ENCODE measurements at regions of chr1 and their contacts with region 1.

Region 1: GRCh38 chr1:182781841-182782586 is 7.6 kb upstream of the NPL start:
- DNase-seq: peak; percentile 33 to 72 (median 54)
- ATAC-seq: peak; percentile 84
- H3K4me3 ChIP-seq: no peak overlapping the region
- H3K4me3 Mint-ChIP-seq: no peak overlapping the region
- H3K27ac ChIP-seq: no peak overlapping the region
- H3K27ac Mint-ChIP-seq: peak overlapping the region in 3 of 9 donors; percentile 33 to 55 (median 39)
- H3K4me1 ChIP-seq: no peaks in the 10 kb centered on the region
- H3K4me1 Mint-ChIP-seq: peaks cover 4 to 20% (median 5%) of the 10 kb centered on the region in 7 donors
- H3K27me3 ChIP-seq: no peaks in the 10 kb centered on the region
- H3K27me3 Mint-ChIP-seq: peaks cover 0 to 12% (median 0%) of the 10 kb centered on the region in 5 donors

Region 2: DNA sequence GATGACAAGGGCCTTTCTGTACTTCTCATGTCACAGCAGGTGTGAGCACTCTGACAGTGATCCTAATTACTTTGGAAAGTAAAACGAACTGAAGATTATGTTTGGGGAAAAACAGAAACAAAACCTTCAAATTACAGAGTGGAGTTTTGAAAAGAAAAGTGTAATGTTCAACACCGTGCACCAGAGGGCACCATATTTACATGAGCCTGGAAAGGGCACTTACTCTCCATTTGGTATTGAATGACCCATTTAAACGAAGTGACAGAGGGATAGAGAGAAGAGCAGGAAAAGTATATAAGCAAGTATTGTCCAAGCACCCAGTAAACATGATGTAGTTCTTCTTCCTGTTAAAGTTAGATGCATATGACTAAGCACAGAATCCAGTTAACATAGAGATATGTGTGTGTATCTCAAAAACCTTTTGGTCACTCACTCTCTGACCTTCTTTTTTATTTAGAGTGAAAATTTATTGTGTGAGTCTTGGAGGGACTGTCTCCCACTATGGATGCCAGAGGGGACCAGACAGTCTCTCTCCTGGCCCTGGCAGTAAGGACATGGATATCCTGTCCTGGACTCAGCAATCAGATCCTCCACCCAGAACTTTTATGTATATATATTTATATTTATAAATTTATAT is 335.9 kb before region 1 on chr1:
- CTCF ChIA-PET with region 1: interaction called, 4 read pairs
- POLR2A ChIA-PET with region 1: no interaction called
- intact Hi-C with region 1: loop called in 1 of 2 experiments (anchors 1 kb)
- DNase-seq: peak in 3 of 9 donors; percentile 12 to 21 (median 13)
- ATAC-seq: peak; percentile 77
- H3K4me3 ChIP-seq: no peak overlapping the region
- H3K4me3 Mint-ChIP-seq: no peak overlapping the region
- H3K27ac ChIP-seq: no peak overlapping the region
- H3K27ac Mint-ChIP-seq: no peak overlapping the region
- H3K4me1 ChIP-seq: no peaks in the 10 kb centered on the region
- H3K4me1 Mint-ChIP-seq: peaks cover 0 to 6% (median 5%) of the 10 kb centered on the region in 7 donors
- H3K27me3 ChIP-seq: no peaks in the 10 kb centered on the region
- H3K27me3 Mint-ChIP-seq: peaks cover 0 to 6% (median 0%) of the 10 kb centered on the region in 5 donors

Region 3: GRCh38 chr1:182595641-182596240 is 186.3 kb before region 1 on chr1:
- CTCF ChIA-PET with region 1: interaction called, 403 read pairs
- POLR2A ChIA-PET with region 1: interaction called, 11 read pairs
- intact Hi-C with region 1: loop called (anchors 1 kb)
- DNase-seq: peak in 8 of 9 donors; percentile 27 to 65 (median 45)
- ATAC-seq: peak; percentile 88
- H3K4me3 ChIP-seq: no peak overlapping the region
- H3K4me3 Mint-ChIP-seq: no peak overlapping the region
- H3K27ac ChIP-seq: no peak overlapping the region
- H3K27ac Mint-ChIP-seq: no peak overlapping the region
- H3K4me1 ChIP-seq: no peaks in the 10 kb centered on the region
- H3K4me1 Mint-ChIP-seq: peaks cover 0 to 11% (median 0%) of the 10 kb centered on the region in 7 donors
- H3K27me3 ChIP-seq: no peaks in the 10 kb centered on the region
- H3K27me3 Mint-ChIP-seq: peaks cover 0 to 18% (median 0%) of the 10 kb centered on the region in 5 donors

Region 4: DNA sequence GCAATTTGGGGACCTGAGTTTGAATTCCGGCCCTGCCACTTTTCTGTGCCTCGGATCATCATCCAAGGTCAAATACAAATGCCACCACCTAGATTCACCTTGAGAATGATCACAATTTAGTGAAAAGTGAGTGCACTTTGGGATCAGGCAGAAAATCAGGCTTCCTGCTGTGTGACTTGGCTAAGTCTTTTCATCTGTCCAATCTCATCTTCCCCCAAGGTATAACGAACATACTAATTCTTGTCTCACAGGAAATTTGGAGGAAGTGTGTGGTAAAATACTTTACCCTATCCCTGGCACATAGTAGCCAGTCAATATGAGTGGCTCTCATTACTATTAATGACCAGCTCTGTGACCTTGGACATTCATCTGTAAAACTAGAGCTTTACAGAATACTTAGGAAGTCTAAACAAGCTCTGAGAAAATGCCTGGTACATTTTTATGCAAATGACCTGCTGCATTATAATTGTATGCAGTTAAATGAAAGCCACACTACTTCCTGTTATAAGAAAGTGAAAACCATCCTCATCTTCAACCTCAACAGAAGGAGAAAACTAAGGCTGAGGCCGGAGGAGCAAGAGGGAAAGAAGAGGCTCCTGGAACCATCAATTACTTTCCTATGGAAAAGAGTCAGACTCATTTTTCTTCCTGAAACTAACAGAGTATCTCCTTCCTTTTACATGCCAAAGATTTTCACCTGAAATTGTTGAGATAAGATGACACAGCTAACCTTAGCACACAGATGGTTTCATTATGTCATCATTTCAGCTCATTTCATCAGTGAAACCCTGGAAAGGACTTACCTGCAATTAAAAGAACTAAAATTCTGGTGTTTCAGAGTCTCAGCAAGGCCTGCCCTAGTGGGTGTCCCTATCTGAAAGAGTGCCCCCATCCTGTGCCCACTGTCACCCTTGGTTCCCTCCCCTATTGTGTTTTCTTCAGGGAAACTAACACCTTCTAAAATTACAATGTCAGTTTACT is 65.0 kb before region 1 on chr1:
- CTCF ChIA-PET with region 1: interaction called, 3 read pairs
- POLR2A ChIA-PET with region 1: no interaction called
- intact Hi-C with region 1: loop called in 1 of 2 experiments (anchors 5 kb)
- DNase-seq: no peak
- ATAC-seq: no peak
- H3K4me3 ChIP-seq: no peak overlapping the region
- H3K4me3 Mint-ChIP-seq: peak overlapping the region in 1 of 10 donors; percentile 18
- H3K27ac ChIP-seq: no peak overlapping the region
- H3K27ac Mint-ChIP-seq: no peak overlapping the region
- H3K4me1 ChIP-seq: peaks cover 4 to 6% of the 10 kb centered on the region in 2 donors
- H3K4me1 Mint-ChIP-seq: peaks cover 9 to 34% (median 27%) of the 10 kb centered on the region in 7 donors
- H3K27me3 ChIP-seq: no peaks in the 10 kb centered on the region
- H3K27me3 Mint-ChIP-seq: no peaks in the 10 kb centered on the region

Region 5: DNA sequence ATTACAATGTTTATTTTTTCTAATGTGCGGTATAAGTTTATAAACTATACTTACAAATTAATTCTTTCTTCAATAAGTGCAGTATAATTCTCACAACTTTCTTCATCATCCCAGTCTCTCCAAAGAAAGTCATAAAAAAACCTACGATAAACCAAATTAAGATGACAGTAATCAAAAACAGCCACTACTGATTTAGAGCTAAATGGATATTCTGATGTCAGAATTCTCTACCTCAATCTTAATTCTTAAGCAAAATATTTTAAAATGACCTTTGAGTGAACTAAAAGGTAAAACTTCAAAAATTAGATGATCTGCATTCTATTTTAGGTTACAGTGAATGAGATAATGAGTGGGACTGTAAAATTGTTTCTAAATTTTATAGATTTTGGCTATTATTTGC is 157.4 kb after region 1 on chr1:
- CTCF ChIA-PET with region 1: no interaction called
- POLR2A ChIA-PET with region 1: no interaction called
- intact Hi-C with region 1: no loop called
- DNase-seq: no peak
- ATAC-seq: no peak
- H3K4me3 ChIP-seq: no peak overlapping the region
- H3K4me3 Mint-ChIP-seq: no peak overlapping the region
- H3K27ac ChIP-seq: no peak overlapping the region
- H3K27ac Mint-ChIP-seq: no peak overlapping the region
- H3K4me1 ChIP-seq: no peaks in the 10 kb centered on the region
- H3K4me1 Mint-ChIP-seq: peaks cover 0 to 4% (median 0%) of the 10 kb centered on the region in 7 donors
- H3K27me3 ChIP-seq: no peaks in the 10 kb centered on the region
- H3K27me3 Mint-ChIP-seq: peaks cover 40 to 59% (median 46%) of the 10 kb centered on the region in 5 donors

Measured in naive thymus-derived CD4-positive, alpha-beta T cell (primary cell).